ENCODE measurements at regions of chr1 and their contacts with region 1.

Region 1: GRCh38 chr1:31955917-31956736 is 18.0 kb upstream of the PTP4A2 start:
- DNase-seq: peak; percentile 96 to 99 (median 99)
- H3K4me3 ChIP-seq: no peak overlapping the region
- H3K4me3 Mint-ChIP-seq: peak overlapping the region; percentile 52 to 80
- H3K27ac ChIP-seq: peak overlapping the region; percentile 94 to 96
- H3K27ac Mint-ChIP-seq: peak overlapping the region; percentile 98 to 100 (median 99)
- H3K4me1 ChIP-seq: peaks cover 92 to 95% of the 10 kb centered on the region in 2 donors
- H3K4me1 Mint-ChIP-seq: peaks cover 88% of the 10 kb centered on the region
- H3K27me3 ChIP-seq: no peaks in the 10 kb centered on the region
- H3K27me3 Mint-ChIP-seq: no peaks in the 10 kb centered on the region
- CTCF ChIP-seq: peak; percentile 47

Region 2: DNA sequence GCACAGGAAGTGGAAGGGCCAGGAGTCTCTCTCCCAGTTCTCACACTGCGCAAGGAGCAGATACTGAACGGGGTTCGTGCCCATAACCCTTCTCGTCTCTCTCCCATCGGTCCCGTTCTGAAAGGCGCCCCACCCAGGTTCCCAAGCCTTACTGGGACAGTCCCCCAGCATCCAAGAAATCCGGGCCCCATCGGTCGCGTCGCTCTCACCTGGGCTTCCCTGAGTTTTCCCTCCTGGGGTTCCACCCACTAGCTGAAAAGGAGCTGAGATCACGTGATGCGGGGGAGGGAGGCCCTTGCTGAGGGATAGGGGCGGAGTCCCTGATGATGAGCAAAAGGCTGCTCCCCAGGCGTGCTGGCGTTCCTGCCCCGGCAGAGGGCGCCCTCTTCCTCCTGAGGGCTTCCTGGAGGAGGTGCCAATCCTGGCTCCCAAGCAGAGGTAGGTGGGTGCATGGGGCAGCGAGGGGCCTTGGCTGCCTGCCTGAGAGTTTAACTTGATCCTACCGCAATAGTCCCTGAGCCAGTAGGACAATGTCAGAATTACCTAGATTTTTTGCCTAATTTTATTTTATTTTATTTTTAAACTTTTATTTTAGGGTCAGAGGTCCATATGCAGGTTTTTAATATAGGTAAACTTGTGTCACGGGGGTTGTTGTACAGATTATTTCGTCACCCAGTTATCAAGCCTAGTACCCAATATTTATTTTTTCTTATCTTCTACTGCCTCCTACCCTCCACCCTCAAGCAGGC is 140.2 kb before region 1 on chr1 and contains the start of gene SPOCD1:
- intact Hi-C with region 1: loop called in 1 of 2 experiments (anchors 5 kb)
- DNase-seq: peak; percentile 71 to 82 (median 76)
- H3K4me3 ChIP-seq: no peak within 1 kb of the TSS
- H3K4me3 Mint-ChIP-seq: no peak within 1 kb of the TSS
- H3K27ac ChIP-seq: no peak within 1 kb of the TSS
- H3K27ac Mint-ChIP-seq: peak within 1 kb of the TSS in 5 of 7 donors; percentile 30 to 72 (median 37)
- H3K4me1 ChIP-seq: peaks cover 0 to 9% of the 10 kb centered on the region in 2 donors
- H3K4me1 Mint-ChIP-seq: peaks cover 28% of the 10 kb centered on the region
- H3K27me3 ChIP-seq: no peaks in the 10 kb centered on the region
- H3K27me3 Mint-ChIP-seq: peaks cover 3 to 14% (median 4%) of the 10 kb centered on the region in 3 donors
- CTCF ChIP-seq: peak; percentile 83
- polyA plus RNA-seq, gene SPOCD1: not detected

Region 3: GRCh38 chr1:31886866-31887265 is 69.3 kb before region 1 on chr1:
- intact Hi-C with region 1: loop called in 1 of 2 experiments (anchors 5 kb)
- DNase-seq: peak; percentile 28 to 47 (median 33)
- H3K4me3 ChIP-seq: no peak overlapping the region
- H3K4me3 Mint-ChIP-seq: no peak overlapping the region
- H3K27ac ChIP-seq: no peak overlapping the region
- H3K27ac Mint-ChIP-seq: peak overlapping the region in 4 of 7 donors; percentile 9 to 58 (median 25)
- H3K4me1 ChIP-seq: peaks cover 43 to 47% of the 10 kb centered on the region in 2 donors
- H3K4me1 Mint-ChIP-seq: peaks cover 36% of the 10 kb centered on the region
- H3K27me3 ChIP-seq: no peaks in the 10 kb centered on the region
- H3K27me3 Mint-ChIP-seq: peaks cover 0 to 2% (median 0%) of the 10 kb centered on the region in 3 donors
- CTCF ChIP-seq: no peak

Region 4: DNA sequence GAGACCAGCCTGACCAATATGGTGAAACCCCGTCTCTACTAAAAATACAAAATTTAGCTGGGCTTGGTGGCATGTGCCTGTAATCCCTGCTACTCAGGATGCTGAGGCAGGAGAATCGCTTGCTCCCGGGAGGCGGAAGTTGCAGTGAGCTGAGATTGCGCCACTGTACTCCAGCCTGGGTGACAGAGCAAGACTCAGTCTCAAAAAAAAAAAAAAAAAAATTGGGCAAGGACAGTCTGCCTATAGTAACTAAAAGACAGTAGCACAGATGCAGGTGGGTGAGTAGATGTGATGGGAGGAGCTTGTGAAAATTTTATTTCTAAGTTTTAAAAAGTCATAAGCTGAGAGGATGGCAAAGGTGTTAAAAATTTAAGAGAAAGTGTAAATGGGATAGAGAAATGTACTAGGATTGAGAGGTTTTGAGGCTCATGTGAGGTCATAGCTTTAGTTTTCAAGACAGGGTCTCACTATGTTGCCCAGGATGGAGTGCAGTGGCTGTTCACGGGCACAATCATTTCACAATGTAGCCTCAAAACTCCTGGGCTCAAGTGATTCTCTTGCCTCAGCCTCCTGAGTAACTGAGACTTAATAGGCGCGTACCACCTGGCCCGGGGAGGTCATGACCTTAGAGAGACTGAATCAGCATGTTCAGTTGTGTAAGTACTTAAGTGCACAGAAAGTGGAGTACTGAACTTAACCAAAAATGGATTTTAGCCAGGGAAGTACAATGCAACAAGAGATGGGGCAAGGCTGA is 51.6 kb before region 1 on chr1:
- intact Hi-C with region 1: loop called (anchors 5 to 10 kb)
- DNase-seq: peak; percentile 71 to 88 (median 84)
- H3K4me3 ChIP-seq: peak overlapping the region in 1 of 3 experiments; percentile 10
- H3K4me3 Mint-ChIP-seq: peak overlapping the region; percentile 37 to 56
- H3K27ac ChIP-seq: peak overlapping the region; percentile 47 to 86
- H3K27ac Mint-ChIP-seq: peak overlapping the region; percentile 86 to 98 (median 97)
- H3K4me1 ChIP-seq: peaks cover 60 to 72% of the 10 kb centered on the region in 2 donors
- H3K4me1 Mint-ChIP-seq: peaks cover 54% of the 10 kb centered on the region
- H3K27me3 ChIP-seq: no peaks in the 10 kb centered on the region
- H3K27me3 Mint-ChIP-seq: peaks cover 1 to 2% (median 2%) of the 10 kb centered on the region in 3 donors
- CTCF ChIP-seq: no peak

Region 5: GRCh38 chr1:31923901-31924535 is 32.1 kb before region 1 on chr1:
- intact Hi-C with region 1: loop called (anchors 5 kb)
- DNase-seq: no peak
- H3K4me3 ChIP-seq: no peak overlapping the region
- H3K4me3 Mint-ChIP-seq: no peak overlapping the region
- H3K27ac ChIP-seq: peak overlapping the region in 1 of 2 donors; percentile 47
- H3K27ac Mint-ChIP-seq: peak overlapping the region in 6 of 7 donors; percentile 45 to 81 (median 72)
- H3K4me1 ChIP-seq: peaks cover 76 to 89% of the 10 kb centered on the region in 2 donors
- H3K4me1 Mint-ChIP-seq: peaks cover 84% of the 10 kb centered on the region
- H3K27me3 ChIP-seq: no peaks in the 10 kb centered on the region
- H3K27me3 Mint-ChIP-seq: no peaks in the 10 kb centered on the region
- CTCF ChIP-seq: no peak

Region 6: DNA sequence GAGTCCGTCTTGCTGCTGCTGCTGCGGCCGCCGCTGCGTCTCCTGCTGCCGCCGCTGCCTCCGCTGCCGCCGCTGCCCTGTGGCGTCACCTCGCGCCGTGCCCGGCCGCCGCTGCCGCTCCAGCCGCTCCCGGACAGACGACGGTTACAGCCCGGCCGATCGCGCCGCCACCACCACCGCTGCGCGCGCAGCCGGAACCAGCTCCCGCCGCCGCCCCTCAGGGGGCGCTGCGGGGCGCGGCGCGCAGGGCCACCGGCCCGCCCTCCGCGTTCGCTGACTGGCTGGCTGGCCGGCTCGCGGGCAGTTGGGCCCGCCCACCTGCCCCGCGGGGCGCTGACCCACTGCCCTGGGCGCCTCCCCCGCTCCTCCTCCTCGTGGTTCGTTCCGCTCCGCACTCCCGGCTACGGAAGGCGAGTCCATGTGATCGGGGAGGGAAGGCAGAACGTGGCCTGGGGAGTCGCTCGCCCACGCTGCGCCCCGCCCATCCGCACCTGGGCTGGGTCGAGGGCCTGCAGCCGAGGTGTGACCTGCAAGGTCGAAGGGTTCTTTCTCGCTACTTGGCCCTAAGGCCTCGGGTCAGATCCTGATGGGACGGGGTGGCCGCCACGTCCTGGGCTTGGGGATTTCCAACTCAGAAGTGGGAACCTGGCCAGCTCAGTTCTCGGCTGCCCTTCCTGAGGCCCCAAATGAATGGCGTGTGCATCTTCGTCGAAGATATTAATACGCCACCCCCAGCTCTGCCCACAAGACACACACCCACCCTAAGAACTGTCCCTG is 17.8 kb before region 1 on chr1 and contains the start of gene PTP4A2:
- intact Hi-C with region 1: loop called in 1 of 2 experiments (anchors 2 kb)
- DNase-seq: peak; percentile 94 to 95 (median 94)
- H3K4me3 ChIP-seq: peak within 1 kb of the TSS; percentile 71 to 97 (median 86)
- H3K4me3 Mint-ChIP-seq: peak within 1 kb of the TSS; percentile 98 to 99
- H3K27ac ChIP-seq: peak within 1 kb of the TSS; percentile 97
- H3K27ac Mint-ChIP-seq: peak within 1 kb of the TSS; percentile 91 to 99 (median 96)
- H3K4me1 ChIP-seq: peaks cover 80 to 88% of the 10 kb centered on the region in 2 donors
- H3K4me1 Mint-ChIP-seq: peaks cover 77% of the 10 kb centered on the region
- H3K27me3 ChIP-seq: no peaks in the 10 kb centered on the region
- H3K27me3 Mint-ChIP-seq: no peaks in the 10 kb centered on the region
- CTCF ChIP-seq: peak; percentile 61
- polyA plus RNA-seq, gene PTP4A2: 227 to 501 (median 294) TPM

Region 7: DNA sequence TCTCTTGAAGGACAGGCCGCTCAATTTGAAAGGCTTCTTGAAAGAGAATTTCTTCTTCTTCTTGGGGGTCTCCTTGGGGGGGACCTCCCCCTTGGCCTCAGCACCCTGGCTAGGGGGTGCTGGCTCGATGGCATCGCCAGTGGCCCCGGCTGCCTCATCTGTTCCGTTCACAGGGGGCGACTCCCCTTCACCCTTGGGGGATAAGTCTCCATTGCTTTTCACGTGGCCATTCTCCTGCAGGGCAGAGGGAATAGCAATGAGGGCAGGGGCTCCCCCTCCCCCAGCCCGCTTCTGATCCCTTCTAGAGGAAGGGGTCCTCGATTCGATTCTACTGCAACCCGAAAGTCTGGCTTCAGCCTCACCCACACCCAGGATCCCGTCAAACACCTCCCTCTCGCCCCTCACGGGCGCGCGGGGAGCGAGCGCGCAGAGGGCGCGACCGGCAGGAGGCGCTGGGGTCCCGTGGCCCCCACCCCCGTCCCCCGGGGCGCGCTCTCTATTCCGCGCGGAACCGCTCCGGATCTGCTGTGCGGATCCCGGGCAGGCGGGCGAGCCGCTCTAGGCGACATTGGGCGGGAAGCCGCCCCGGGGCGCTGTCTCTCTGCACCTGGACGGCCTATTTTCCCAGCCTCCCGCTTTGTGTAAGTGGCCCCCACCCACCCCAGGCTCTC is 378.9 kb after region 1 on chr1:
- intact Hi-C with region 1: no loop called
- DNase-seq: peak; percentile 64 to 71 (median 69)
- H3K4me3 ChIP-seq: peak overlapping the region; percentile 23 to 76 (median 70)
- H3K4me3 Mint-ChIP-seq: peak overlapping the region; percentile 86 to 93
- H3K27ac ChIP-seq: no peak overlapping the region
- H3K27ac Mint-ChIP-seq: peak overlapping the region in 4 of 7 donors; percentile 71 to 84 (median 74)
- H3K4me1 ChIP-seq: peaks cover 46 to 58% of the 10 kb centered on the region in 2 donors
- H3K4me1 Mint-ChIP-seq: peaks cover 48% of the 10 kb centered on the region
- H3K27me3 ChIP-seq: peaks cover 7 to 15% of the 10 kb centered on the region in 2 donors
- H3K27me3 Mint-ChIP-seq: peaks cover 21 to 25% (median 23%) of the 10 kb centered on the region in 3 donors
- CTCF ChIP-seq: peak; percentile 93

Measured in CD14-positive monocyte (primary cell).